ENCODE measurements at regions of chr2 and their contacts with region 1.

Region 1: GRCh38 chr2:192267484-192267883 is 72.8 kb upstream of the TMEFF2 start:
- DNase-seq: no peak
- H3K4me3 ChIP-seq: no peak overlapping the region
- H3K27ac ChIP-seq: no peak overlapping the region
- H3K4me1 ChIP-seq: no peaks in the 10 kb centered on the region
- H3K27me3 ChIP-seq: no peaks in the 10 kb centered on the region
- CTCF ChIP-seq: no peak
- EP300 ChIP-seq: no peak
- POLR2A ChIP-seq: no peak

Region 2: DNA sequence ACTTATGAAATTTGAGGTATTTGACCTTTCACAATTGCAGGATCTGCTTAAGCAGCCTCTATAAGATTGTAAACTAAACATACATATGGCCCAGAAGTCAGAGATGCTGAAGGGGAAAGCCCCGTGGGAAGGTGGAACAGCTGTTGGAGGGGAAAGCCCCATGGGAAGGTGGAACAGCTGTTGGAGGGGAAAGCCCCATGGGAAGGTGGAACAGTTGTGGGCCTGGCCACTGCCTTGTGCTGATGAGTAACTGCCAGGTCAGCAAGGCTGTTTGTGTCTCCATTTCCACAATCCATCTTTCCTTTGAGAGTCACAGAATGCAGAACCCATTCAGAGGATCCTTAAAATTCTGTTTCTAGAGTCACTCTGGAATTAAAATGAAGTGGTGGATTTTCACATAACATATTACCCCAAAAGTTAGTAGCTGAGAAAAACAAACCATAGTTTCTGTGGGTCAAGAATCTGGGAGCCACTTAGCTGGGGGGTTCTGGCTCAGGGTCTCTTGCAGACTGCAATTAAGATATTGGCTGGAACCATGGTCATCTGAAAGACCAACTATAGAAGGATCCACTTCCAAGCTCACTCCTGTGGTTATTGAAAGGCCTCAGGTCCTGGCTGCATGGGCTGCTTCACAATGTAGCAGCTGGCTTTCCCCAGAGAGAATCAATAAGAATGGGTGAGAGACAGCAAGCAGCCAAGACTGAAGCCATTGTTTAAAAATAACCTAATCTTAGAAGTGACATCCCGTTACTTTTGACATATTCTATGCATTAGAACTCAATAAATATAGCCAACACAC is 334.0 kb before region 1 on chr2:
- in situ Hi-C with region 1: no loop called
- intact Hi-C with region 1: no loop called
- DNase-seq: peak; percentile 34
- H3K4me3 ChIP-seq: no peak overlapping the region
- H3K27ac ChIP-seq: no peak overlapping the region
- H3K4me1 ChIP-seq: peaks cover 0 to 20% (median 7%) of the 10 kb centered on the region in 4 donors
- H3K27me3 ChIP-seq: no peaks in the 10 kb centered on the region
- CTCF ChIP-seq: no peak
- EP300 ChIP-seq: no peak
- POLR2A ChIP-seq: no peak

Region 3: GRCh38 chr2:192070099-192070498 is 197.4 kb before region 1 on chr2:
- in situ Hi-C with region 1: no loop called
- intact Hi-C with region 1: no loop called
- DNase-seq: no peak
- H3K4me3 ChIP-seq: no peak overlapping the region
- H3K27ac ChIP-seq: no peak overlapping the region
- H3K4me1 ChIP-seq: no peaks in the 10 kb centered on the region
- H3K27me3 ChIP-seq: no peaks in the 10 kb centered on the region
- CTCF ChIP-seq: no peak
- EP300 ChIP-seq: no peak
- POLR2A ChIP-seq: no peak

Region 4: DNA sequence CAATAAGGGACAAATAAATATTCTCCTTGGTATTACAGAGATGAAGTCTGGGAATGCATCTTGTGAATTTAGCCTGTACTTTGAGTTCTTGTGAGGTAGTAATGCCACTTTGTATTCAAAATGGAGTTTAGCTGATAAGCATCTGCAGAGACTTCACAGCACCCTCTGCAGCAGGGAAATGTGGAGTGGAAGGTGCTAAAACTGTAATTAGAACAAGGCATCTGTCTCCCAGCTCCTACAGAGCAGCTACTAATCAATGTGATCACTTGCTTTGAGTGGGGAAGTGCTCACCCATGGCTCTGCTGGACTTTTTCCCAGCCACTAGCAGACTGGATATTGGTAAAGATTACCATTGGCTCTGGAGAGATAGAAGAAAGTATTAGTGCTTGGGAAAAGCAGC is 16.5 kb before region 1 on chr2:
- in situ Hi-C with region 1: no loop called
- intact Hi-C with region 1: loop called (anchors 1 kb)
- DNase-seq: no peak
- H3K4me3 ChIP-seq: no peak overlapping the region
- H3K27ac ChIP-seq: no peak overlapping the region
- H3K4me1 ChIP-seq: no peaks in the 10 kb centered on the region
- H3K27me3 ChIP-seq: no peaks in the 10 kb centered on the region
- CTCF ChIP-seq: no peak
- EP300 ChIP-seq: no peak
- POLR2A ChIP-seq: no peak

Measured in transverse colon (tissue), 4 donors.